ENCODE measurements at regions of chr15 and their contacts with region 1.

Region 1: DNA sequence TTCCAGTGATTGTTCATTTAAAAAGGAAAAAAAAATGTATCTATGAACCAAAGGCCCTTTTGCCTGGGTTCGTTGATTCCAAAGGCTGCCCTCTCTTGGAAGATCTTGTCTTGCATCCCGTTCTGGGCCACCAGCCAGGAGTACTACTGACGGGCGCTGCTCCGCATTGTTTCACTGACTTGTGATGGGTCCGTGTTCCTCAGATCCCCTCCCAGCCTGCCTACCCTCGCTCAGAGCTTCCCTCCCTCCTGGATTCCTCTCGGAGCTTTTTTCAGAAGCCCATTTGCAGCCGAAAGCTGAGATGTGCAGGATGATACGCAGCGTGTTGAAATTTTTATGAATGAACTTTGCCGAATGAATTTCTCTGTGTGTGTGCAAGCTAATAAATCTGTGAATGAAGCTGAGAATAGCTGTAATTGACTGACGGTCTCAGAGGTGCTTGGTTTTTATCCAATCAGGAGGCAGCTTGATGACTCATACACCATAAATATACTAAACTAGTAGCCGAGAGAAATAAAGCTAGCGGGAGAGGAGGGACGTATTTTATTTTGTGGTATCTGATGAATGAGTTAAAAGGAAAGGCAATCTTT is at the start of gene SHC4:
- DNase-seq: peak; percentile 14
- H3K4me3 Mint-ChIP-seq: peak within 1 kb of the TSS; percentile 69
- H3K27ac Mint-ChIP-seq: no peak within 1 kb of the TSS
- H3K4me1 Mint-ChIP-seq: peaks cover 31% of the 10 kb centered on the region
- H3K27me3 Mint-ChIP-seq: peaks cover 52% of the 10 kb centered on the region
- total RNA-seq, gene SHC4: 0.21 to 0.25 TPM

Region 2: GRCh38 chr15:48352474-48353072 is 611.0 kb before region 1 on chr15:
- CTCF ChIA-PET with region 1: no interaction called
- intact Hi-C with region 1: loop called (anchors 10 kb)
- DNase-seq: peak; percentile 68
- H3K4me3 Mint-ChIP-seq: no peak overlapping the region
- H3K27ac Mint-ChIP-seq: no peak overlapping the region
- H3K4me1 Mint-ChIP-seq: peaks cover 2% of the 10 kb centered on the region
- H3K27me3 Mint-ChIP-seq: no peaks in the 10 kb centered on the region

Region 3: GRCh38 chr15:48888836-48889235 is 74.8 kb before region 1 on chr15:
- CTCF ChIA-PET with region 1: no interaction called
- intact Hi-C with region 1: no loop called
- DNase-seq: no peak
- H3K4me3 Mint-ChIP-seq: no peak overlapping the region
- H3K27ac Mint-ChIP-seq: no peak overlapping the region
- H3K4me1 Mint-ChIP-seq: no peaks in the 10 kb centered on the region
- H3K27me3 Mint-ChIP-seq: peaks cover 14% of the 10 kb centered on the region

Region 4: GRCh38 chr15:48925714-48926223 is 37.9 kb before region 1 on chr15:
- CTCF ChIA-PET with region 1: no interaction called
- intact Hi-C with region 1: loop called (anchors 5 kb)
- DNase-seq: peak; percentile 19
- H3K4me3 Mint-ChIP-seq: no peak overlapping the region
- H3K27ac Mint-ChIP-seq: peak overlapping the region; percentile 37
- H3K4me1 Mint-ChIP-seq: peaks cover 31% of the 10 kb centered on the region
- H3K27me3 Mint-ChIP-seq: peaks cover 13% of the 10 kb centered on the region

Region 5: DNA sequence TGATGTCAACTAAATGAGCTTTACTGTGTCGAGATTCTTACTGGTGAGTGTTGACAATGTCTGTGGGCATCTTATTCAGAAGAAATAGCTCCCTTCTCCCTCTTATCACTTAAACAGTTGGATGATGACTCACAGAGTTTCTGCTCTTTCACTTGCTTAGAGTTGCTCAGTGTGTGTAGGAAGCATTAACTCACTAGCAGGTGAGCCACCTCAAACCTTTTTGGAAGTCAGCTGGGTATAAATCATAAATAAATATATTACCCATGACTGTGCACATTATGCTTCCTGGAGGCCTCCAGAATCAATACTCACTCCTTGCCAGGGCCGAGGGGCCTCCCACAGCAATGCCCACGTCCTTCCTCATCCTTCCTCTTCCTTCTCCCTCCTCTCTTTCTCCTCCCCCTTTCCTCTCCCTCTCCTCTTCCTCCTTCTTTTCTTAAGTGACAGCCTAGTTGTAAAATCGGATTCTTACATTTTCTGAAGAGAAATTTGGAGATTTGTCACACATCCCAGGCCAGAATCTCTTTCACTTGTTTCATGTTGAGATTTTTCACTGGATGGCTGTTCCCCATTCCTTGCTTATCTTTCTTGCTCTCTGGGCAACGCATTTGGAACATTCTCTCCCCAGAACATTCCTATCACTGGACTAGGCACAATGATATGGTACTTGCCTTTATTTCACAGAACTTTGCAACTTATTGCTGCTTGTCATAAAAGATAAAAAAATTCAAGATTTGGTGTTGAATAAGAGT is 17.4 kb before region 1 on chr15:
- CTCF ChIA-PET with region 1: no interaction called
- intact Hi-C with region 1: loop called (anchors 1 kb)
- DNase-seq: no peak
- H3K4me3 Mint-ChIP-seq: no peak overlapping the region
- H3K27ac Mint-ChIP-seq: no peak overlapping the region
- H3K4me1 Mint-ChIP-seq: peaks cover 8% of the 10 kb centered on the region
- H3K27me3 Mint-ChIP-seq: peaks cover 7% of the 10 kb centered on the region

Region 6: DNA sequence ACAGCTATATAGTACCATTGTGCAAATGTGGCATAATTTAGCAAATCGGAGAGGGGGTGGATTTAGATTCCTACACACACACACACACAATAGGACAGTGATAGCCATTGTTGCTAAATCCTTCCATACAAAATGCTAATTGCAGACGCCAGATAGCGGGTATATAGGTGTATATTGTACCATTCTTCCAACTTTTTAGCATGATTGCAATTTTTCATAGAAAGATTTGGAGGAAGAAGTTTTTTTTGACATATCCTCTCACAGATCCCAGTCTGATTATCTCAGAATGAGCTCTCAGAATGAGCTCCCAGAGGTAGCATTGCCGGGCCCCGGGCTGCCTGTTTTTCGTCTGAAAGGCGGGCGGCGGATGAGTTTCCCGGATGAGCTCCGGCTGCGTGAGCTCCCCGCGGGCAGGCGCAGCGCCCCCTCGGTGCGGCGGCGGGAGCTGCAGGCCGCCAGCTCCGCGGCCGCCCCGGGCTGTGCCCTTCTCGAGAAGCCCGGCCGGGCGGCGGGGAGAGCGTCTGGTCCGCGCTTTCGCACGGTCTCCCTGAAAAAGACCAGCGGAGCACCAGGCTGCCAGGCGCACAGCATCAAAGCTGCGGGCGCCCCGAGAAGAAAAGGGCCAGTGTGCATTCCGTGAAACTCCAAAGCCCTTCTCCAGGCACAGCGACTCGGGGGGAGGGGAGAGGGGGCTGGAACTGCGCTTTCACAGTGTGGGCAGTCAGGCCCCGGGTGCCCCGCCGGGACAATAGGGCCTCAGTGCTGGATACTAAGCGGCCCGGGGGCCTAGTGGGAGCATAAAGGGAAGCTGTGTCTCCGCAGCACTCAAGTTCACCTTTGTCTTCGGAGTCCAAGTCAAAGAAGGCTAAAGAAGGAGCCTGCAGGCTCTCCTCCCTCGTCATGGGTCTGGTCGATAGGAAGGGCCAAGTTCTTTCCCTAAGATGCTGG is 12.1 kb after region 1 on chr15:
- CTCF ChIA-PET with region 1: interaction called, 61 read pairs
- intact Hi-C with region 1: no loop called
- DNase-seq: peak; percentile 80
- H3K4me3 Mint-ChIP-seq: peak overlapping the region; percentile 39
- H3K27ac Mint-ChIP-seq: no peak overlapping the region
- H3K4me1 Mint-ChIP-seq: no peaks in the 10 kb centered on the region
- H3K27me3 Mint-ChIP-seq: peaks cover 14% of the 10 kb centered on the region

Region 7: GRCh38 chr15:49101536-49101935 is 137.9 kb after region 1 on chr15:
- CTCF ChIA-PET with region 1: no interaction called
- intact Hi-C with region 1: no loop called
- DNase-seq: no peak
- H3K4me3 Mint-ChIP-seq: no peak overlapping the region
- H3K27ac Mint-ChIP-seq: no peak overlapping the region
- H3K4me1 Mint-ChIP-seq: no peaks in the 10 kb centered on the region
- H3K27me3 Mint-ChIP-seq: no peaks in the 10 kb centered on the region

Region 8: GRCh38 chr15:49115062-49115461 is 151.4 kb after region 1 on chr15:
- CTCF ChIA-PET with region 1: no interaction called
- intact Hi-C with region 1: no loop called
- DNase-seq: no peak
- H3K4me3 Mint-ChIP-seq: no peak overlapping the region
- H3K27ac Mint-ChIP-seq: no peak overlapping the region
- H3K4me1 Mint-ChIP-seq: no peaks in the 10 kb centered on the region
- H3K27me3 Mint-ChIP-seq: no peaks in the 10 kb centered on the region

Measured in activated naive CD4-positive, alpha-beta T cell treated with anti-CD3 and anti-CD28 coated beads for 36 hours (primary cell).